Stomach (tissue), 19 donors: ENCODE measurements at regions of chr2 and their contacts with region 1.

Region 1: GRCh38 chr2:231604685-231605606 is 12.3 kb downstream of the TEX44 start:
- DNase-seq: peak; percentile 99 to 100
- H3K4me3 ChIP-seq: peak overlapping the region; percentile 37 to 50 (median 44)
- H3K27ac ChIP-seq: peak overlapping the region; percentile 95 to 99 (median 97)
- H3K4me1 ChIP-seq: peaks cover 23 to 65% (median 38%) of the 10 kb centered on the region in 4 donors
- H3K27me3 ChIP-seq: no peaks in the 10 kb centered on the region
- CTCF ChIP-seq: no peak
- EP300 ChIP-seq: peak; percentile 88
- POLR2A ChIP-seq: no peak

Region 2: GRCh38 chr2:231709981-231710798 is 105.2 kb after region 1 on chr2:
- intact Hi-C with region 1: loop called (anchors 5 kb)
- DNase-seq: peak; percentile 91 to 95
- H3K4me3 ChIP-seq: peak overlapping the region; percentile 82 to 97 (median 90)
- H3K27ac ChIP-seq: peak overlapping the region; percentile 96 to 100 (median 100)
- H3K4me1 ChIP-seq: peaks cover 32 to 56% (median 55%) of the 10 kb centered on the region in 4 donors
- H3K27me3 ChIP-seq: no peaks in the 10 kb centered on the region
- CTCF ChIP-seq: peak in 3 of 7 experiments; percentile 68 to 97 (median 79)
- EP300 ChIP-seq: no peak
- POLR2A ChIP-seq: peak in 1 of 4 donors; percentile 14